ENCODE measurements at regions of chr20 and their contacts with region 1.

Region 1: GRCh38 chr20:38221119-38221589 is 39.4 kb downstream of the KIAA1755 start:
- DNase-seq: no peak
- H3K4me3 ChIP-seq: no peak overlapping the region
- H3K27me3 ChIP-seq: no peaks in the 10 kb centered on the region
- CTCF ChIP-seq: peak; percentile 96

Region 2: DNA sequence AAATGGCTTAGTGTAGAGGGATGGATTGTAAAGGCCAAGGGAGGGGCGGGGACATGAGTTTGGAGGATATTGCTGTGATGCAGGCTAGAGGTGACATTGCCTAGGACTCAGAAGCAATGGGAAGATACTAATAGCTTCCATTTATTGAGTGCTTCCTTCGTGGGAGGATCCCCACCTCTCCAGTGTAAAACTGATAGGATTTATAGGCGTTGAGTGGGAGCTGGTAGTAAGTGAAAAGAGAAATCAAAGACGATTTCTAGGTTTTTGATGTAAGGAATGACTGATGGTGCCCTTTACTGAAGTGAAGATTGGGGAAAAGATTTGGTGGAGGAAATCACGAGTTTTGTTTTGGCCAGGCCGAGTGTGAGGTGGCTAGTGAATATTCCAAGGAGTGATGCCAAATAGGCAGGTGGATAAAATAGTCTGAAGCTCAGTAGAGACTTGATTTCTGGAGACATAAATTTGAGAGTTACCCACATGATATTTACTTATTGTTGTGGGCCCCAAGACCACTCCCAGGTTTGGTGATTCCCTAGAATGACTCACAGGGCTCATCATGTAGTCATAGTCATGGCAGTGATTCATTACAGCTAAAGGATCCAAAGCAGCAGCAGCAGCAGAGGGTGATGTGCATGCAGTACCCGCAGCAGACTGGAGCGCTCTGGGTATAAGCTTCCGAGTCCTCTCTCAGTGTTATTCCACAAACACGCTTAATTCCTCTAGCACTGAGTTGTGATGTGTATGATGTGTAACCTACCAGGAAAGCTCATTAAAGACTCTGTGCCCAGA is 177.4 kb before region 1 on chr20:
- CTCF ChIA-PET with region 1: interaction called, 482 read pairs
- POLR2A ChIA-PET with region 1: no interaction called
- DNase-seq: no peak
- H3K4me3 ChIP-seq: no peak overlapping the region
- H3K27me3 ChIP-seq: no peaks in the 10 kb centered on the region
- CTCF ChIP-seq: no peak

Region 3: DNA sequence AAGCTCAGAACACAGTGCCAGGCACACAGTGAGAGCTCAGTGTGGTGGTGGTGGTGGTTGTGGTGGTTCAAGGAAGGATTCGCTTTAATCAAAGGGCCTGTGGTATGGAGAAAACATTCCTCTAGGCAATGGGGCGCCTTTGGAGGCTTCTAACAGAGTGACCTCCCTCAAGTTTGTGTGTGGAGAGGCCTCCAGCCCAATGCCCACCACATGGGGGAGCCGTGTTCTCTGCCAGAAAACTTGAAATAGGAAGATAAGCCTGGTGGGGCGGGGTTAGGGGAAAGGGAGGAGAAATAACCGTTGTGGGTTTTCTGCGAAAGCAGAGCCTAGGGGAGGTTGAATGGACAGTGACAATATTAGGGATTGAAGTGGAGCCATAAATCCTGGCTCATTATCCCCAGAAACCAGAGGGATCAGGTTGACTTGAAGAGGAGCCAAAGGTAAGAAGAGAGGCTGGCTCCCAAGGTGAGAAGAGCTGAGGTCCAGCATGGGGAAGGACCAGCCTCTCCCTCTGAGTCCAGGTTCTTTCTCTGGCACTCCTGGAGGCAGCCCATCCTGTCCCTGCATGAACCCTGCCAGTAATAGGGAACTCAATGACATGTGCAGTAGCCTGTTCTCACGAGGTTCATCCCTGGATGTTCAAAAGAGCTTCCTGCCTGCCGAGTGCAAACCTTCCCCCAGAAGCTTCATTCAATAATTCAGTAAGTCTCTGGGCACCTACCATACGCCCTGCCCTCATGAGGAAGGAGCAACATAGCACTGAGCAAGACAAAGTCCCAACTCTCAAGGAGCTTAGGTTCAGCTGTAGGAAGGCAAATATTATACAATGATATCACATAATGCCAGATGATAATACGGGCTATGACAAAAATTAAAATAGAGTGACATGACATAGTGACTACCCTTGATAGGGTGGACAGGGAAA is 107.5 kb before region 1 on chr20:
- CTCF ChIA-PET with region 1: interaction called, 18 read pairs
- POLR2A ChIA-PET with region 1: no interaction called
- DNase-seq: no peak
- H3K4me3 ChIP-seq: no peak overlapping the region
- H3K27me3 ChIP-seq: no peaks in the 10 kb centered on the region
- CTCF ChIP-seq: peak; percentile 34

Region 4: DNA sequence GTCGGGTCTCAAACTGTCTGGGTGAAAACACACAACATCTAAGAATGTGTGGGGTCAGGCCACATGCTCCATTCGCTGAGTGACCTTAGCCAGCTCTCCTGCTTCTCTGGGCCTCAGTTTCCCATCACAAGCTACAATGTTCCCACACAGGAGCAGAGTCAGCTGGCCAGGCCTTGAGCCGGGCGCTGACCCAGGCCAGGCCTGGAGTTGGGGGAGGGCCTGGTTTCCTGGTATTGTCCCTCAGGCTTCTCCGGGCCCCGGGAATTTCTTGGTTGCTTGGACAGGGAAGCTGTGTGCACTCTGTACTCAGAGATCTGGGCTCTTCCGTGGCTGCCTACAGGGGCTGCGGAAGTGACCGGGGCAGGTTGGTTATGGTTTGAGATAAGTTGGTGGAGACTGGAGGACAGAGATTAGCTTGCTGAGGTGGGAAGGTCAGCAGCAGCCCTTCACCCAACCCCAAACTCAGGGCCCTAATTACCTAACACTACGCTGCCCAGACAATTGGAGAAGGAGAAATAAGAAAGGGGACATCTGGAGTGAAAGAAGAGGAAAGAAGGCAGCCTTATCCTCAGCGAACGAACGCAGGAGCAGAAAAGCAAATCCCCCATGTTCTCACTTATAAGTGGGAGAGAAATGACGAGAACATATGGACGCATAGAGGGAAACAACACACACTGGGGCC is 62.3 kb before region 1 on chr20:
- CTCF ChIA-PET with region 1: interaction called, 223 read pairs
- POLR2A ChIA-PET with region 1: no interaction called
- DNase-seq: no peak
- H3K4me3 ChIP-seq: no peak overlapping the region
- H3K27me3 ChIP-seq: no peaks in the 10 kb centered on the region
- CTCF ChIP-seq: no peak

Region 5: DNA sequence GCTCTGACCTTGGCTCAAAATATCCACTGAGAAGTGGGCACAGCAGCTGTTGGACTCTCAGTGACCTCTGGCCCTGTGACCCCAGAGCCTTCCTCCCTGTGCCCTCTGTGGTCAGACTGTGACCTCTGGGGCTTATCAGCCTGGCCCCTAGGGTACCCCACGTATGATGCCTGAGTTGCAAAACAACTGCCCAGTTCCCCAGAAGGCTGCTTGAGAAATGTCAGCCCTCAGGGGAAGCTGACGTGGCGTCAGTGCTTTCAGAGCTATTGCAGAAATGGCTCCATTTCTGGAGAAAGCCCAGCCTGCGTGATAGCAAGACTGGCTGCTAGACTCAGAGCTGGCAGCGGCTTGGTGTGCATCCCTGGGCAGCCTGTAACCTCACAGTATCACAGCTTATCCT is 24.6 kb before region 1 on chr20:
- CTCF ChIA-PET with region 1: interaction called, 19 read pairs
- POLR2A ChIA-PET with region 1: interaction called, 3 read pairs
- DNase-seq: peak; percentile 75
- H3K4me3 ChIP-seq: no peak overlapping the region
- H3K27me3 ChIP-seq: no peaks in the 10 kb centered on the region
- CTCF ChIP-seq: no peak

Region 6: GRCh38 chr20:38304845-38305447 is 83.8 kb after region 1 on chr20:
- CTCF ChIA-PET with region 1: interaction called, 188 read pairs
- POLR2A ChIA-PET with region 1: no interaction called
- DNase-seq: no peak
- H3K4me3 ChIP-seq: no peak overlapping the region
- H3K27me3 ChIP-seq: peaks cover 2% of the 10 kb centered on the region; the same call in 1 of the 2 replicates
- CTCF ChIP-seq: peak; percentile 81

Region 7: DNA sequence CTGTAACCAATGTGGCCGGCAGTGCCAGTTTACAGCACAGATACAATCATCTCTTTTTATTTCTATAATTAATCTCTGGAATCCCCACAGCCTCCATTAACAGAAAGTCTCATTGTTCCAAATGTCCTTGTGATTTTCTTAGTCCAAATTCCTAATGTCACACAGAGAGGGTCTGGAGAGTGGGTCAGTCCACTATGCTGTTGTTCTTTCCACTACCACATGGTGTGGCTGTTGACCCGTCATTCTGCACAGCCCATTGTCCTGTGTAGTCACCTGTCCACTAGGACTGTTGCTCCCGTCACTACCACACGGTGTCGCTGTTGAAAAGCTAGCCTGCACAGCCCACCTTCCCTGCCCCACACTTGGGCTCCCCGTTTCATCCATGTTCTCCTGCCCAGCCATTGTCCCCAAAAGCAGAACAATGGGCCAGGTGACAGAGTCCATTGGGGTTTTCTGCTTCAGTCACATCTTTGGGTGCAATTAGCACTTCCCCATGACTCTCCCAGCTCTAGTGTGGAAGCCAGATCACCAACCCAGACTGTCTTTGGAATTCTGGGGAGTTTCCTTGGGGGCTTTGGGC is 116.5 kb after region 1 on chr20:
- CTCF ChIA-PET with region 1: no interaction called
- POLR2A ChIA-PET with region 1: no interaction called
- DNase-seq: no peak
- H3K4me3 ChIP-seq: no peak overlapping the region
- H3K27me3 ChIP-seq: peaks cover 13% of the 10 kb centered on the region
- CTCF ChIP-seq: peak; percentile 27; the same call in 1 of the 2 replicates

Region 8: GRCh38 chr20:38407321-38407720 is 186.2 kb after region 1 on chr20:
- CTCF ChIA-PET with region 1: interaction called, 26 read pairs
- POLR2A ChIA-PET with region 1: no interaction called
- DNase-seq: no peak
- H3K4me3 ChIP-seq: no peak overlapping the region
- H3K27me3 ChIP-seq: no peaks in the 10 kb centered on the region
- CTCF ChIP-seq: no peak

Region 9: GRCh38 chr20:38460040-38460623 is 239.0 kb after region 1 on chr20:
- CTCF ChIA-PET with region 1: no interaction called
- POLR2A ChIA-PET with region 1: no interaction called
- DNase-seq: no peak
- H3K4me3 ChIP-seq: no peak overlapping the region
- H3K27me3 ChIP-seq: peaks cover 2% of the 10 kb centered on the region; the same call in 1 of the 2 replicates
- CTCF ChIP-seq: no peak

Region 10: GRCh38 chr20:38472513-38473372 is 251.6 kb after region 1 on chr20 and contains the start of gene RALGAPB:
- CTCF ChIA-PET with region 1: no interaction called
- POLR2A ChIA-PET with region 1: no interaction called
- DNase-seq: peak; percentile 89
- H3K4me3 ChIP-seq: peak within 1 kb of the TSS; percentile 71
- H3K27me3 ChIP-seq: no peaks in the 10 kb centered on the region
- CTCF ChIP-seq: peak; percentile 65
- polyA plus RNA-seq, gene RALGAPB: 14.8 and 24.3 TPM in 2 replicates

Region 11: DNA sequence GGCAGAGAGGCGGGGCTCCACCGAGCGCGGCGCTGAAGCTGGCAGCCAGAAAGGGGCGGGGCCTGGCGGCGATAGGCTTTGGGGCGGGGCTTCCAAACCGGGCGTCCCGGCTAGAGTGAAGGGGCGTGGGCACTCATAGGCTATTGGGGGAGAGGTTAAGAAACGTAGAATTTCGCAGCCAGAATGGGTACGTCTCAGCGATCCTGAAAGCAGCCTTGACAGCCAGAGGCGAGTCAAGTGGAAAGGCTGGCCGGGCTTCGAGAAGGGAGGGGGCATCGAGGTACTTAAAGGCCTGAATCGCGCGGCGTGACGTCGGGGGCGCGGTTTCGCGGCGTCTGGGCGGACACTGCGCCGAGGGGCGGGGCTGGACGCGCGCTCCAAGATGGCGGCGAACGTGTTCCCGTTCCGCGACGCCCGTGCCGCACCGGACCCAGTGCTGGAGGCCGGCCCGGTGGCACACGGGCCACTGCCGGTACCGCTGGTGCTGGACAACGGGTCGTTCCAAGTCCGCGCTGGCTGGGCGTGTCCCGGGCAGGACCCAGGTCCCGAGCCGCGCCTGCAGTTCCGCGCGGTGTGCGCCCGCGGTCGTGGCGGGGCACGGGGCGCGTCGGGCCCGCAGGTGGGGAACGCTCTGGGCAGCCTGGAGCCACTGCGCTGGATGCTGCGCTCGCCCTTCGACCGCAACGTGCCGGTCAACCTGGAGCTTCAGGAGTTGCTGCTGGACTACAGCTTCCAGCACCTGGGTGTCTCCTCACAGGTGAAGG is 527.1 kb after region 1 on chr20 and contains the start of gene ACTR5:
- CTCF ChIA-PET with region 1: no interaction called
- POLR2A ChIA-PET with region 1: no interaction called
- DNase-seq: peak; percentile 46
- H3K4me3 ChIP-seq: peak within 1 kb of the TSS; percentile 63
- H3K27me3 ChIP-seq: peaks cover 2% of the 10 kb centered on the region
- CTCF ChIP-seq: no peak
- polyA plus RNA-seq, gene ACTR5: 4.0 and 5.4 TPM in 2 replicates